ENCODE measurements at regions of chr13 and their contacts with region 1.

Region 1: DNA sequence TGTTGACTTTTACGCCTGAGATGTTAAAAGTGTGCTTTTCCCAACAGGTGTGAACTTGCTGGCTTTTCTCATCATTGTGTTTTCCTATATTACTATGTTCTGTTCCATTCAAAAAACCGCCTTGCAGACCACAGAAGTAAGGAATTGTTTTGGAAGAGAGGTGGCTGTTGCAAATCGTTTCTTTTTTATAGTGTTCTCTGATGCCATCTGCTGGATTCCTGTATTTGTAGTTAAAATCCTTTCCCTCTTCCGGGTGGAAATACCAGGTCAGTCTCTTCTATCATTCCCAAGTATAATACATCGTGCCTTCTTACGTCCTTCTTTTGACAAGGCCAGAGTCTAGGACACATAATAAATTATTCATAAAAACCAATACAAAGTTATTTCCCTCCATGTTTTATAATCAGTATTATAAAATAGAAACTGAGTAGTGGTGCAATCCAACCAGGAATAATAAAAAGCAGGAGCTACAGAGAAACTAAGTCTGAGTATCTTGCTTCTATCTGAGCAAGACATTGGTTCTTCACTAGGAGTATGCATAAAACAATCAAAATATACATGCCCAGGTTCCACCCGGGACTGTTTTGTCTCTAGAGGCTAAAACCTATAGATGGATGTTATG is 57.9 kb downstream of the RXFP2 start:
- DNase-seq: peak; percentile 52
- H3K4me3 ChIP-seq: no peak overlapping the region
- H3K27ac ChIP-seq: no peak overlapping the region
- H3K4me1 ChIP-seq: peaks cover 22% of the 10 kb centered on the region
- H3K27me3 ChIP-seq: peaks cover 5 to 10% of the 10 kb centered on the region in 2 experiments
- CTCF ChIP-seq: peak in 1 of 2 donors; percentile 36
- POLR2A ChIP-seq: no peak

Region 2: DNA sequence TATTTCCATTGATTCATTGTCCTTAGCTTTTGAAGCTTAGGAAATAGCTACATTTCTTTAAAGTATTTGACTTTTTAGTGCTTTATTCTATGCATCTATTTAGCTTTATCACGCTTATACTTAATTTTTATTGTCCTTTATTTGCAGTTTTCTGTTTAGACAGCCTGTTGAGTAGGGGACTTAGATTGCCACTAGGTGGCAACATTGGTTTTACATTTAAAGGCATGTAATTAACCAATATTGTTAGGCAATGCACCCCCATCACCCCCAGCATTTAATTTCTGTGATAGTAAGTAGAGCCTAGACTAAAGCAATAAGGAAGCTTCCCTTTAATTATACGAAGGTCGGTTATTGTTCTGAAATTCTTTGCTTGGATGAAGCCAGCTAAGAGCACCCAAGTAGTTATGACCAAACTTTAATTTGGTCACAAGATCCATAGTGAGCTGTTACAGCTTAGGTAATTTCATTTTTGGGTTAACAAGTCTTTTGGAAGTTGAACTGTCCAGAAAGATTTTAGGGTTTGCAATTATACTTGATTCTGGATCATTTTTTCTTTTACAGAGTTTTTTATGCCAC is 561.0 kb before region 1 on chr13:
- CTCF ChIA-PET with region 1: interaction called, 16 read pairs
- POLR2A ChIA-PET with region 1: no interaction called
- dilution Hi-C with region 1: no loop called
- intact Hi-C with region 1: loop called (anchors 5 kb)
- DNase-seq: peak; percentile 38
- H3K4me3 ChIP-seq: no peak overlapping the region
- H3K27ac ChIP-seq: no peak overlapping the region
- H3K4me1 ChIP-seq: no peaks in the 10 kb centered on the region
- H3K27me3 ChIP-seq: no peaks in the 10 kb centered on the region
- CTCF ChIP-seq: peak; percentile 41 to 44
- POLR2A ChIP-seq: no peak

Region 3: DNA sequence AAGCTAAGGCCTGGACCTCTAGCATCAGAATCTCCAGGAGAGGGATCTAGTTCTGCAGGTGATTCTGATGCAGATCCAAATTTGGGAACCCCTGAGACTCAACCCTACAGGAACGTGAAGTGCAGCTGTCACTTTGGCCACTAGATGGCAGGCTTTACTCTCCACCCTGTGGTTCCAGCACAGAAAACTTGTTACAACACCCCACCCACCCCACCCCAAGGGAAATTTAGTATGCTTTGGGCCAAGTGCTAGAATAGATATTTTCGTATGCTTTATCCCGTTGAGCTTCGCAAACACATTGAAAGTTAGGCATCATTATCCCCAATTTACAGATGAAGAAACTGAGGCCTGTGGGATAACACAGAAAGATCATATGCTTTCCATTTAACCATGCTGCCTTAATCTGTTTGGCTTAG is 365.5 kb before region 1 on chr13:
- CTCF ChIA-PET with region 1: interaction called, 34 read pairs
- POLR2A ChIA-PET with region 1: interaction called, 4 read pairs
- dilution Hi-C with region 1: no loop called
- intact Hi-C with region 1: loop called (anchors 1 kb)
- DNase-seq: peak; percentile 33
- H3K4me3 ChIP-seq: no peak overlapping the region
- H3K27ac ChIP-seq: no peak overlapping the region
- H3K4me1 ChIP-seq: peaks cover 5% of the 10 kb centered on the region
- H3K27me3 ChIP-seq: peaks cover 5 to 9% of the 10 kb centered on the region in 2 experiments
- CTCF ChIP-seq: peak; percentile 46 to 84
- POLR2A ChIP-seq: no peak

Region 4: GRCh38 chr13:31638577-31638976 is 158.7 kb before region 1 on chr13:
- CTCF ChIA-PET with region 1: no interaction called
- POLR2A ChIA-PET with region 1: no interaction called
- dilution Hi-C with region 1: no loop called
- intact Hi-C with region 1: loop called (anchors 5 kb)
- DNase-seq: peak; percentile 93
- H3K4me3 ChIP-seq: no peak overlapping the region
- H3K27ac ChIP-seq: peak overlapping the region; percentile 94
- H3K4me1 ChIP-seq: peaks cover 26% of the 10 kb centered on the region
- H3K27me3 ChIP-seq: no peaks in the 10 kb centered on the region
- CTCF ChIP-seq: no peak
- POLR2A ChIP-seq: no peak

Region 5: GRCh38 chr13:31742097-31742734 is 55.0 kb before region 1 on chr13:
- CTCF ChIA-PET with region 1: interaction called, 7 read pairs
- POLR2A ChIA-PET with region 1: no interaction called
- dilution Hi-C with region 1: no loop called
- intact Hi-C with region 1: loop called (anchors 1 kb)
- DNase-seq: peak; percentile 64
- H3K4me3 ChIP-seq: no peak overlapping the region
- H3K27ac ChIP-seq: no peak overlapping the region
- H3K4me1 ChIP-seq: no peaks in the 10 kb centered on the region
- H3K27me3 ChIP-seq: peaks cover 0 to 2% of the 10 kb centered on the region in 2 experiments
- CTCF ChIP-seq: peak; percentile 88 to 95
- POLR2A ChIP-seq: no peak

Region 6: DNA sequence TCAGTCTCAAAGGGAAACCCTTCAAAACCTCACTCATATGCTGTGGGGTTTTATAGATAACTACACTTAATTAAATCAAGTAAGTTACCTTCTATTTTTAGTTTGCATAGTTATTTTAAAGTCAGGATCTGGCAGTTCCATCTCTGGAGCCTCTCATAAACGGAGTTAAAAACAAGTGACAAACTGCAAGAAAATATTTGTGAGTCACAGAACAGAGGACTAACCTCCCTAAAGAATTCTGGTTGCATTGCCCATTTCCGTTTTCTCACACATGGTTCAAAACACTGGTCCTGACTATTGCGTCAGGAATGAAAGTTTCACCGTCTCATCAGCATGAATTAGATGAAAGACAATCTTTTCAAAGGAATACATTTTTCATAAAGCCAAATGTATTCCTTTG is 47.3 kb before region 1 on chr13:
- CTCF ChIA-PET with region 1: interaction called, 6 read pairs
- POLR2A ChIA-PET with region 1: no interaction called
- dilution Hi-C with region 1: no loop called
- intact Hi-C with region 1: loop called (anchors 2 kb)
- DNase-seq: peak; percentile 20
- H3K4me3 ChIP-seq: no peak overlapping the region
- H3K27ac ChIP-seq: no peak overlapping the region
- H3K4me1 ChIP-seq: peaks cover 2% of the 10 kb centered on the region
- H3K27me3 ChIP-seq: peaks cover 9 to 14% of the 10 kb centered on the region in 2 experiments
- CTCF ChIP-seq: no peak
- POLR2A ChIP-seq: no peak

Region 7: DNA sequence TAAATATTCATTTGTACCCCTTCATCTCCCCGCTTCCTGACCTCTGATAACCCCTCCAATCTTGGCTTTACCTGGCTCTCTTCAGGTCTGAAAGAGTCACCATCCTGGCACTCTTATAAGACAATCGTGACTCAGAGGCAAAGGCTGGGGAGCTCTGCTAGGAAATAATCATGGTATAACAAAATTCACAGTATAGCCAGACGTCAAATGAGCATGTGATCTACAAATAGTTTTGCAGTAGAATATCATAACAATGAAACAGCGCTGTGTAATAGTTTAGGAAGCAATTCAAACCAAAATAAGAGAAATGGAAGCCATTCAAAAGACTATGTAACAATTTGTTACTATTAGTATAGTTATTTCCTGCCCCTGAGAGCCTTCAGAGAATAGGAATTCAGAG is 23.7 kb before region 1 on chr13:
- CTCF ChIA-PET with region 1: interaction called, 4 read pairs
- POLR2A ChIA-PET with region 1: no interaction called
- dilution Hi-C with region 1: no loop called
- intact Hi-C with region 1: loop called (anchors 2 kb)
- DNase-seq: peak; percentile 56
- H3K4me3 ChIP-seq: peak overlapping the region in 1 of 3 experiments; percentile 52
- H3K27ac ChIP-seq: no peak overlapping the region
- H3K4me1 ChIP-seq: peaks cover 15% of the 10 kb centered on the region
- H3K27me3 ChIP-seq: peaks cover 5 to 8% of the 10 kb centered on the region in 2 experiments
- CTCF ChIP-seq: no peak
- POLR2A ChIP-seq: no peak

Region 8: DNA sequence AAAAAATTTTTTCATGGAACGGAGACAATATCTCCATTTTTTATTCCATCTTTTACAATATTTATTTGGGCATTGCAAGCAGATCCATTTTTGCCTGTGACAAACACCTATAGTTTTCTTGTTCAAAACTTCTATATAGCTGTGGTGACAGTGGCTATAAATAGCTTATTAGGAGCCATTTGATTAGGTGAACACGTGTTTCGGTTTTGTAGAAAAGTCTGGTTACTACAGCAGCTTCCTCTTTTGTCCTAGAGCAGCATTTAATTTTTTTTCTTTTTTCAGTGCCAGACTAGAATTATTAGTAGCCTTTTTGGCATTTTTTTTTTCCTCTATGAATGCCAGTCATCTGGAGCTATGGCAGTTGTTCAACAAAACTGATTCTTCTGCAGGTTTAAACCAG is 65.6 kb after region 1 on chr13:
- CTCF ChIA-PET with region 1: no interaction called
- POLR2A ChIA-PET with region 1: no interaction called
- dilution Hi-C with region 1: no loop called
- intact Hi-C with region 1: no loop called
- DNase-seq: no peak
- H3K4me3 ChIP-seq: no peak overlapping the region
- H3K27ac ChIP-seq: no peak overlapping the region
- H3K4me1 ChIP-seq: no peaks in the 10 kb centered on the region
- H3K27me3 ChIP-seq: peaks cover 0 to 2% of the 10 kb centered on the region in 2 experiments
- CTCF ChIP-seq: no peak
- POLR2A ChIP-seq: no peak